Ovary (tissue), 10 donors: ENCODE measurements at regions of chr11 and their contacts with region 1.

Region 1: DNA sequence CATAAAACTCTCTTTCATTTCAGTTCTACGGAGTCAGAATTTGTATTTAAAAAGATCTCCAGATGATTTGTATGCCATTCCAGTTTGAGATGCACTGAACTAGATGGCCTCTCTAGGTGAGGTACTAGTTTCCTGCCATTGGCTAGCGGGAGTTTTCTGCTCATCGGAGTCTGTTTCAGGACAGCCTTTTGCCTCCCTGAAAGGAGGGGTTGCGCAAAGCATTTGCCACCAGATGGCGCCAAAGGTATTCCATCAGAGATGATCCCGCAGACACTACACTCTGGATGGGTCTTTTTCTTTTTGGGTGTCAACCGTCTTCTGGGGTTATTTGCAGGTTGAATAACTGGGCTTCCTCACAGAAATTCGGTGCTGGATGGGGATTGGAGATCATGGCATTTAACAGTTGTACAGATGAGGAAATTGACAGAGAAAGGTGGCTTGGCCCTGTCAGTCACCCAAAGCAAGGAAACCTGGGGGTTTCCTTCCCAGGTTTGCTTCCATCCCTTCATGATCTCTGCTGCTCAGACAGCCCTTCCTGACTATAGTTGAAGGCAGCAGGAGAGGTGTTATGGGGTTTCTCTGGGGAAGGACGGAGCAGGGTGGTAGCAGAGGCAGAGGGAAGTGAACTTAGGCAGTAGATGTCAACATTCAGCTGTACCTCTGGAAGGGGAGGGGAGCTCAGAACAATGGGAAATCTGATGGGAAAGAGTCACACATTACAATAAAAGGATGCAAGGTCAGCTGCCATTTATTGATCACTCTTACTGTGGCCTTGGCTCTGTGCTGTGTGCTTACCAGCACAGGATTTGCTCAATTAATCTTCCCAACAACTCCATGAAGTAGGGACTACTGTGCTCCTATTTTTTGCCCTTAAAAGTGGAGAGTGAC is 81.6 kb downstream of the CCDC81 start:
- DNase-seq: peak; percentile 82 to 92 (median 88)
- H3K4me3 ChIP-seq: no peak overlapping the region
- H3K27ac ChIP-seq: no peak overlapping the region
- H3K4me1 ChIP-seq: peaks cover 13% of the 10 kb centered on the region
- H3K27me3 ChIP-seq: no peaks in the 10 kb centered on the region
- CTCF ChIP-seq: peak; percentile 83 to 91 (median 84)
- EP300 ChIP-seq: no peak
- POLR2A ChIP-seq: no peak

Region 2: GRCh38 chr11:86588566-86589090 is 132.3 kb after region 1 on chr11:
- intact Hi-C with region 1: loop called in 1 of 4 experiments (anchors 10 kb)
- DNase-seq: no peak
- H3K4me3 ChIP-seq: no peak overlapping the region
- H3K27ac ChIP-seq: no peak overlapping the region
- H3K4me1 ChIP-seq: peaks cover 7% of the 10 kb centered on the region
- H3K27me3 ChIP-seq: no peaks in the 10 kb centered on the region
- CTCF ChIP-seq: no peak
- EP300 ChIP-seq: no peak
- POLR2A ChIP-seq: no peak

Region 3: DNA sequence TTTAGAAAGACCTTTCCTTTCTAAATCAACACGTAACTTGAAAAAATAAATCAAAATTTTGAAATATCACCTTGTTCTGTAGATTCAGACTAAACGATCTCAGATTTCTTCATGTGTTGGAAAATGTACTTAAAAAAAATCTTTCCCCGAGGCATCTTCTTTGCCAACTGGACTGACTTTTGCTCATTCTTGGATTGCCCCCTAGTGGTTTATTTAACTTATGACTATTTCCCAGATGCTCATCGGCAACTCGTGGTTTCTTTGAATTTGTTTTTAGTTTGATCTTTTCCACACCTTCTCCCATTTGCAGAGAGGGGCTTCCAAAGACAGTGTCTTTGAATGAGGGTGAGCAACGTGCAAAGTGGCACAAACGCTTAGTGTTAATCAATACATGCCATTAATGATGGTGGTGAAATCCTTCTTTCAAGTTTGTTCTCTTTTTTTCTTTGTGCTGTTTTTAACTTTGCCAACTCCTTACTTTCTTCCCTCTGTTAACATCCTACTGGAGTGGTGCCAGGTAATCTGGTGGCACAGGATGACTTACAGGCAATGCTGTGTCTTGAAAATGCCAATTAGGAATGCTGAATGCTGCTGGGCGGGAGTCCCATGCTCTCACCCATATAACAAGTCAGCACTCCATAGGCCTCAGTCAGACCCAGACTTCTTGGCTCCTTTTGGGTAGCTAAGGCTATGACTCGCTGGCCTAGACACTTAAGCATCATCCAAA is 362.3 kb after region 1 on chr11:
- intact Hi-C with region 1: loop called (anchors 2 to 5 kb)
- DNase-seq: no peak
- H3K4me3 ChIP-seq: no peak overlapping the region
- H3K27ac ChIP-seq: no peak overlapping the region
- H3K4me1 ChIP-seq: peaks cover 1% of the 10 kb centered on the region
- H3K27me3 ChIP-seq: no peaks in the 10 kb centered on the region
- CTCF ChIP-seq: peak; percentile 37 to 89 (median 87)
- EP300 ChIP-seq: no peak
- POLR2A ChIP-seq: no peak

Region 4: DNA sequence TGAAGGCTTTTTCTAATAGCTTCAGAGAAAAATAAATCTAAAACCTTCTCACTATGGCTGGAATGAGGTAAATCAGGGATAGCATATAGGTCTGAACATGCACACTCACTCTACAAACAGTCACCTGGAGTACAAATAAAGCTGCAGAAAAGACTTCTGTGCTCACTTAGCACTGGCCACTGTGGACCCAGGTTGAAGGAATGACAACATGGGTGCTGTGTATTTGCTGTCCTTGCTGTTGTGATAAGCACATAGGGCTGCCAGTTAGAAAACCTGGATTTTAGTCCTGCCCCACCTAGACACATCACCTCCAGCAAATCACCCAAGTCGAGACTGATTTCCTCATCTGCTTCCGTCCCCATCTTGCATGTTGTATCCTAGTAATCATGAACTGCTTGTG is 447.7 kb after region 1 on chr11:
- intact Hi-C with region 1: loop called in 1 of 4 experiments (anchors 10 kb)
- DNase-seq: no peak
- H3K4me3 ChIP-seq: no peak overlapping the region
- H3K27ac ChIP-seq: no peak overlapping the region
- H3K4me1 ChIP-seq: no peaks in the 10 kb centered on the region
- H3K27me3 ChIP-seq: no peaks in the 10 kb centered on the region
- CTCF ChIP-seq: no peak
- EP300 ChIP-seq: no peak
- POLR2A ChIP-seq: no peak